ENCODE measurements at regions of chr16 and their contacts with region 1.

Region 1: DNA sequence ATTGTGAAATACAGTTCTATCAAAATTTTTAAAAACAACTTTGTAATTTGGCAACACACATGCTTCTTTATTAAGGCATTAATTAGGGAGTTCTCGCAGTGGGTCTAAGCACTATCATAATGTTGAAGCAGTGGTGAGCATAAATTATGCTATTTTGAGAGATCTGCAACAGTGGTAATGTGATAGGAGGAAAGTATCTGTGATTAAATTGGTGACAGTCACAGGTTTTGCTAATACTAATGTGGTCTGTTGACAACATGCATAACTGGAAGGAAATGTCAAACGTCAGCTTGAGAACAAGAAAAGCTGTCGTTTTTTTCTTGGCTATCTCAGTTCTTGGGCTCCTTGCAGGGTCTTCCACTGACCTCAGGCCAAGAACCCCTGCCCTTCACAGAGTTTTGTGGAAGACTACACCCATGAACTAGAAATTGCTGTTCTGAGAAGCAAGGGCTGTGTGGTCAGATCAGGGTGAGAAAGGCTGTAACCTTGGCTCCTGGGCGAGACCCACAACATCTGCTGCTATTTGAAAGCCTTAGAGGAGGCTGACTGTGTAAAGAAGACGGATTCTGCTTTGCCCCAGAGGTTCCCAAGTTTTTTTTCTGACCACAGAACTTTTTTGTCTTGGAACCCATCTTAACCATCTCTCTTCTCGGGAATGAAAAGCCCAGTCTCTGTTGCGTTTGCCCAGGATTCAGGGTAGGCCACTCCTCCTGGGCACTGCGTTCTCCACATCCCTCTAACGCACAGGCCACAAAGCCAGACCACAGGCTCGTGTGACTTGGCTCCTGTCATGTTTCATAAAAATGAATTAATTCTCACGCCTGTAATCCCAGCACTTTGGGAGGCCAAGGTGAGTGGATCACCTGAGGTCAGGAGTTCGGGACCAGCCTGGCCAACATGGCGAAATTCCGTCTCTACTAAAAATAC is 13.9 kb downstream of the ATP2A1 start:
- DNase-seq: no peak
- ATAC-seq: no peak
- H3K4me3 ChIP-seq: no peak overlapping the region
- H3K4me3 Mint-ChIP-seq: no peak overlapping the region
- H3K27ac ChIP-seq: no peak overlapping the region
- H3K27ac Mint-ChIP-seq: no peak overlapping the region
- H3K4me1 ChIP-seq: no peaks in the 10 kb centered on the region
- H3K4me1 Mint-ChIP-seq: no peaks in the 10 kb centered on the region
- H3K27me3 ChIP-seq: no peaks in the 10 kb centered on the region
- H3K27me3 Mint-ChIP-seq: no peaks in the 10 kb centered on the region

Region 2: DNA sequence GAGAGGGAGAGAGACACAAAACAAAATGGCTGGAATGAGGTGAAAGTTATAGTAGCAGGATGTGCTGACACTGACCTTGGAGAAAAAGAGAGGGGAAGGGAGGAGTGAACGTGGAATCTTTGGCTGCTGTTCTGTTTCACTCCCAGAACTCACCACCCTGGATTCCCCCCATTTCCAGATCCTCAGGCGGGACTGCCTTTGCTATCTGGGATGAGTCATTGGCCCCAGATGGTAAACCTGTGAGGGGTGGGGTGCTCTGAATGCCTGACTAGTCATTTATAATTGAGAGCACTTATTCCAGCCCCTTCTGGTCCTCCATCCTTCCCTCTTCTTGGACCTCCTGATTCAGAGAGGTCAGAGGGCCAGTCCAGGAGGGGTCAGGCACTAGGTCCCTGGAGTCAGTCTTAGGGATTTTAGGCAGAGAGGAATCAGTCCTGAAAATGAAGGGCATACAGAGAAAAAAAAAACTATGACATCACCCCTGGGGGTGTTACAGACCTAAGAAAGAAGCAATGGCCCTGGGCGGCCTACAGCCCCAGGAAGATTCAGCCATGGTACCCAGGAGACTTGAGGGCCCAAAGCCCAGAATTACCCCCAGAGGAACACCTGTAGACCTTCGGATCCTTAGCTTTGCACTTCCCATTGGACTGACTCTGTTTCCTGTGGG is 883.6 kb after region 1 on chr16:
- CTCF ChIA-PET with region 1: interaction called in 1 of 2 experiments, 10 read pairs
- POLR2A ChIA-PET with region 1: no interaction called
- DNase-seq: no peak
- ATAC-seq: no peak
- H3K4me3 ChIP-seq: no peak overlapping the region
- H3K4me3 Mint-ChIP-seq: no peak overlapping the region
- H3K27ac ChIP-seq: no peak overlapping the region
- H3K27ac Mint-ChIP-seq: no peak overlapping the region
- H3K4me1 ChIP-seq: no peaks in the 10 kb centered on the region
- H3K4me1 Mint-ChIP-seq: peaks cover 5 to 26% (median 6%) of the 10 kb centered on the region in 3 donors
- H3K27me3 ChIP-seq: peaks cover 0 to 3% of the 10 kb centered on the region in 2 experiments
- H3K27me3 Mint-ChIP-seq: no peaks in the 10 kb centered on the region